GM12878 (cell line): ENCODE measurements at regions of chr7 and their contacts with region 1.

Region 1: DNA sequence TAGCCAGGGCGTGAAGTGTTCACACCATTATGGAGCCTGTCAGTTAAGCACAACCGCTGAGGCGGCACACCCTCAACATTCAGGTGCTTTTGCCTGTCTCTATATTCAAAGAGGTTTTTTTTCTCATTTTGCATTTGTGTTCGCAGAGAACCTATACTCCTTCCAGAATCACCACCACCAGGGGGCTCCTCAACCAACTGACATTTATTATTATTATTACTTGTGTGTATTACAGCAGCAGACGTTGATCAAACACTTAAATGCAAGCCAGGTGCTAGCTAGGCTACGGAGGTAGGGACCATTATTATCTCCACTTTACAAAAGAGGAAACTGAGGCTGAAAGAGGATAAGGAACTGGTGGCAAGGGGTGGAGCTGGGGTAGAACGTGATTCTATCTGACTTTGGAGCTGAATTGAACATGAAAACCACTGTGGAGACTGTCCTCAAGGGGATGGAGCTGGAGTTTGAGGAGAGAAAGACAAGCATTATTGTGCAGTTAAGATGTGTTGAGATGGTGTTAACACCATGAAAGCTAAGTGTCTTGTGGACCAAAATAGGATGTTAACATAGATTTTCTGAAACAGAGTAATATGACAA is 133.8 kb upstream of the PLXNA4 start:
- DNase-seq: no peak
- ATAC-seq: 0 out of 3 replicates have a peak, but pooled peaks have one; percentile 34
- H3K4me3 ChIP-seq: no peak overlapping the region
- H3K27ac ChIP-seq: no peak overlapping the region
- H3K4me1 ChIP-seq: no peaks in the 10 kb centered on the region
- H3K27me3 ChIP-seq: no peaks in the 10 kb centered on the region
- CTCF ChIP-seq: peak; percentile 24 to 38 (median 37); a peak in 4 of 6 replicates
- EP300 ChIP-seq: no peak
- POLR2A ChIP-seq: no peak
- RAD21 ChIP-seq: peak; percentile 46

Region 2: GRCh38 chr7:133121175-133121844 is 411.2 kb after region 1 on chr7:
- CTCF ChIA-PET with region 1: no interaction called
- POLR2A ChIA-PET with region 1: no interaction called
- RAD21 ChIA-PET with region 1: no interaction called
- SMC1A ChIA-PET with region 1: interaction called, 7 read pairs
- in situ Hi-C with region 1: no loop called
- intact Hi-C with region 1: loop called (anchors 10 kb)
- DNase-seq: no peak
- ATAC-seq: no peak
- H3K4me3 ChIP-seq: no peak overlapping the region
- H3K27ac ChIP-seq: no peak overlapping the region
- H3K4me1 ChIP-seq: no peaks in the 10 kb centered on the region
- H3K27me3 ChIP-seq: no peaks in the 10 kb centered on the region
- CTCF ChIP-seq: no peak
- EP300 ChIP-seq: no peak
- POLR2A ChIP-seq: no peak
- RAD21 ChIP-seq: no peak

Region 3: DNA sequence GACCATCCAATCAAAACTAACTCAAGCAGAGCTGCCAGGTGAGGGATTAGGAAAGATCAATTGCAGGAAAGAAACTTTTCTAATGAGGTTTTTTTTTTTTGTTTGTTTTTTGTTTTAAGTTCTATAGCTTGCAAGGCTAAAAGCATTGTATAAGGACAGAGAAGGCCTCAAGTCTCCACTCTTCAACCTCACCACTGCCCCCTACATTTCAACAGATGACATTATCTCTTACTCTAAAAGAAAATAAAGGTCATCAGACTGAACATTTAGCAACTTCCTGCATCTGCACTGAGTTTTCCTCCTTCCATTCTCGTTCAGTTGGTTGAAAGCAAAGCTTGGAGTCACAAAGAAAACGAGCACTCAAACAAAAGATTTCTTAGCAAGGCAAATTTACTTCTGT is 497.6 kb after region 1 on chr7:
- CTCF ChIA-PET with region 1: interaction called, 4 read pairs
- POLR2A ChIA-PET with region 1: no interaction called
- RAD21 ChIA-PET with region 1: interaction called, 4 read pairs
- SMC1A ChIA-PET with region 1: no interaction called
- in situ Hi-C with region 1: no loop called
- intact Hi-C with region 1: loop called (anchors 10 kb)
- DNase-seq: no peak
- ATAC-seq: peak; percentile 66
- H3K4me3 ChIP-seq: no peak overlapping the region
- H3K27ac ChIP-seq: no peak overlapping the region
- H3K4me1 ChIP-seq: no peaks in the 10 kb centered on the region
- H3K27me3 ChIP-seq: no peaks in the 10 kb centered on the region
- CTCF ChIP-seq: peak; percentile 24 to 36 (median 28); a peak in 4 of 6 replicates
- EP300 ChIP-seq: no peak
- POLR2A ChIP-seq: no peak
- RAD21 ChIP-seq: peak; percentile 49

Region 4: DNA sequence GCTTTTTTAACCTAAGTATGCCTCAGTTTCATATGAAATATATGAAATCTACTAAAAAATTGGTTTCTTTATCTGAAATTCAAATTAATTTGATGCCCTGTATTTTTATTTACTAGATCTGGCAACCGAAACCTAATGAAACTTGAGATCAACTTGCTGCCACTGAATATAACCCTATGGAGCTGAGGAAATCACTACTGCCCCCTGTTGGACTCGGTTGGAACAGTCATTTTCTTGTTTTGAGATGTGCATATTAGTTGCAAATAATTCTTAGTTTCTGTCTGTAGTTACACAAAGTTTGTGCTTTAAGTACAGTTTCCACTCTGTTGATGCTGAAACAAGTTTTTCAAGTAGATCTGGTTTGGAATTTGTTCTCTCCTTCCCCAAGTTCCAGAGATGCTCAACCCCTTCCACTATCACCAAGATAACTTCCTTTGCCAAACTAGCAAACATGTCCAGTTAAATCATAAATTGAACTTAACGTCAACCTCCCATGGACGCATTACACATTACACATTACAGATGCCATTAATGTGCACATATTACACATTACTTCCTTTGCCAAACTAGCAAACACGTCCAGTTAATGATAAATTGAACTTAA is 520.6 kb after region 1 on chr7:
- CTCF ChIA-PET with region 1: interaction called, 4 read pairs
- POLR2A ChIA-PET with region 1: no interaction called
- RAD21 ChIA-PET with region 1: no interaction called
- SMC1A ChIA-PET with region 1: no interaction called
- in situ Hi-C with region 1: no loop called
- intact Hi-C with region 1: loop called (anchors 10 kb)
- DNase-seq: no peak
- ATAC-seq: peak; percentile 71
- H3K4me3 ChIP-seq: no peak overlapping the region
- H3K27ac ChIP-seq: no peak overlapping the region
- H3K4me1 ChIP-seq: no peaks in the 10 kb centered on the region
- H3K27me3 ChIP-seq: peaks cover 0 to 4% of the 10 kb centered on the region in 2 experiments; a peak in 2 of 4 replicates
- CTCF ChIP-seq: peak; percentile 56 to 72 (median 61); a peak in 5 of 6 replicates
- EP300 ChIP-seq: no peak
- POLR2A ChIP-seq: no peak
- RAD21 ChIP-seq: peak; percentile 79

Region 5: GRCh38 chr7:133434055-133434865 is 724.2 kb after region 1 on chr7:
- CTCF ChIA-PET with region 1: interaction called, 25 read pairs
- POLR2A ChIA-PET with region 1: no interaction called
- RAD21 ChIA-PET with region 1: interaction called, 9 read pairs
- SMC1A ChIA-PET with region 1: interaction called, 11 read pairs
- in situ Hi-C with region 1: no loop called
- intact Hi-C with region 1: loop called (anchors 5 kb)
- DNase-seq: no peak
- ATAC-seq: peak; percentile 68
- H3K4me3 ChIP-seq: no peak overlapping the region
- H3K27ac ChIP-seq: no peak overlapping the region
- H3K4me1 ChIP-seq: no peaks in the 10 kb centered on the region
- H3K27me3 ChIP-seq: no peaks in the 10 kb centered on the region
- CTCF ChIP-seq: peak; percentile 34 to 67 (median 45); a peak in 5 of 6 replicates
- EP300 ChIP-seq: no peak
- POLR2A ChIP-seq: no peak
- RAD21 ChIP-seq: peak; percentile 87